K562 (cell line): ENCODE measurements at regions of chr9 and their contacts with region 1.

Region 1: GRCh38 chr9:135085830-135086546 is 1.5 kb upstream of the OLFM1 start:
- DNase-seq: peak; percentile 63 to 79 (median 74)
- ATAC-seq: peak; percentile 86
- H3K4me3 ChIP-seq: no peak overlapping the region
- H3K27ac ChIP-seq: no peak overlapping the region
- H3K4me1 ChIP-seq: peaks cover 0 to 13% of the 10 kb centered on the region in 2 experiments; a peak in 2 of 5 replicates
- H3K27me3 ChIP-seq: peaks cover 9 to 36% of the 10 kb centered on the region in 2 experiments; a peak in 3 of 5 replicates
- CTCF ChIP-seq: peak; percentile 83 to 89 (median 86)
- EP300 ChIP-seq: no peak
- POLR2A ChIP-seq: no peak
- RAD21 ChIP-seq: peak; percentile 62 to 86

Region 2: GRCh38 chr9:135343837-135344522 is 258.0 kb after region 1 on chr9:
- CTCF ChIA-PET with region 1: interaction called, 12 read pairs
- POLR2A ChIA-PET with region 1: no interaction called
- in situ Hi-C with region 1: loop called (anchors 5 kb)
- intact Hi-C with region 1: loop called (anchors 2 kb)
- DNase-seq: peak; percentile 70 to 90 (median 85)
- ATAC-seq: peak; percentile 95
- H3K4me3 ChIP-seq: no peak overlapping the region
- H3K27ac ChIP-seq: no peak overlapping the region
- H3K4me1 ChIP-seq: peaks cover 0 to 5% of the 10 kb centered on the region in 2 experiments; a peak in 2 of 5 replicates
- H3K27me3 ChIP-seq: peaks cover 5 to 62% of the 10 kb centered on the region in 2 experiments; a peak in 4 of 5 replicates
- CTCF ChIP-seq: peak; percentile 83 to 95 (median 91)
- EP300 ChIP-seq: no peak
- POLR2A ChIP-seq: no peak
- RAD21 ChIP-seq: peak in 1 of 2 experiments; percentile 81; a peak in 3 of 4 replicates

Region 3: DNA sequence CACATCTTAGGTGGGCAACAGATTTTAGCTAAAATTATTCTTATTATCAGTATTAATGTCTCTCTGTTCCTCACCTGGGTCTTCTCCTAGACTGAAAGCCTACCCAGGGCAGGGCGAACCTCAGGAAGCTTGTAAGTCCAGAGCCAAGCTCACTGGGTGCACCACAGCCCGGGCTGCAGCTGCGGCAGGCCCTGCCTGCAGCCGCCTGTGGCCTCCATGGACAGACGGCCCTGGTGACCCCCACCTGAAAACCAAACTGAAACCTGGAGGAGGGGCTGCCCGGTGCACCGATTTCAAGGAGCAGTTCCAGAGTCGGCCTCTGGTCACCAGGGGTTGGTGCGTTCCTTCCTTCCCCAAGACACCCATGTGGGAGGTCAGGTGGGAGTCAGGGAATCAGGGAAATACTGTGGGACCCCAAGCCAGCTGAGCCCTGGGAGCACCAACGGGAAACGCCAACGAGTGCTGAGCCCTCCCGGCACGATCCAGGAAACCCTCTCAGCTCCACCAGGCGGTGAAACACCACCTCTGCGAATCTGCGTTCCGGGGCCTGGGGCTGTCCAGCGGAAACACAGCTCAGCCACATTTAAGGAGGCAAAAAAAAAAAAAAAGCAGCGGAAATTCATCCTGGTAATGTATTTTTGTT is 325.0 kb after region 1 on chr9:
- CTCF ChIA-PET with region 1: interaction called, 33 read pairs
- POLR2A ChIA-PET with region 1: no interaction called
- in situ Hi-C with region 1: loop called (anchors 5 kb)
- intact Hi-C with region 1: loop called (anchors 2 kb)
- DNase-seq: no peak
- ATAC-seq: no peak
- H3K4me3 ChIP-seq: no peak overlapping the region
- H3K27ac ChIP-seq: no peak overlapping the region
- H3K4me1 ChIP-seq: peaks cover 4 to 26% of the 10 kb centered on the region in 2 experiments; a peak in 1 of 5 replicates
- H3K27me3 ChIP-seq: peaks cover 3 to 34% of the 10 kb centered on the region in 2 experiments; a peak in 4 of 5 replicates
- CTCF ChIP-seq: 0 out of 6 replicates have a peak, but pooled peaks of 1 of the 3 experiments have one; percentile 18
- EP300 ChIP-seq: no peak
- POLR2A ChIP-seq: no peak
- RAD21 ChIP-seq: no peak